ENCODE measurements at regions of chr9 and their contacts with region 1.

Region 1: GRCh38 chr9:120875954-120876841 is 790 bp downstream of the PHF19 start:
- DNase-seq: peak; percentile 61 to 89 (median 67)
- H3K4me3 ChIP-seq: peak overlapping the region; percentile 67 to 83
- H3K4me3 Mint-ChIP-seq: peak overlapping the region; percentile 81 to 91 (median 85)
- H3K27ac ChIP-seq: peak overlapping the region; percentile 78
- H3K27ac Mint-ChIP-seq: peak overlapping the region; percentile 85 to 98 (median 93)
- H3K4me1 ChIP-seq: peaks cover 73% of the 10 kb centered on the region
- H3K4me1 Mint-ChIP-seq: peaks cover 61 to 80% (median 66%) of the 10 kb centered on the region in 4 donors
- H3K27me3 ChIP-seq: no peaks in the 10 kb centered on the region
- H3K27me3 Mint-ChIP-seq: no peaks in the 10 kb centered on the region

Region 2: GRCh38 chr9:120692901-120693699 is 183.1 kb before region 1 on chr9:
- CTCF ChIA-PET with region 1: no interaction called
- POLR2A ChIA-PET with region 1: no interaction called
- intact Hi-C with region 1: no loop called
- DNase-seq: no peak
- H3K4me3 ChIP-seq: no peak overlapping the region
- H3K4me3 Mint-ChIP-seq: no peak overlapping the region
- H3K27ac ChIP-seq: no peak overlapping the region
- H3K27ac Mint-ChIP-seq: peak overlapping the region in 1 of 7 donors; percentile 1
- H3K4me1 ChIP-seq: peaks cover 12% of the 10 kb centered on the region
- H3K4me1 Mint-ChIP-seq: peaks cover 18 to 35% (median 26%) of the 10 kb centered on the region in 4 donors
- H3K27me3 ChIP-seq: no peaks in the 10 kb centered on the region
- H3K27me3 Mint-ChIP-seq: no peaks in the 10 kb centered on the region

Region 3: DNA sequence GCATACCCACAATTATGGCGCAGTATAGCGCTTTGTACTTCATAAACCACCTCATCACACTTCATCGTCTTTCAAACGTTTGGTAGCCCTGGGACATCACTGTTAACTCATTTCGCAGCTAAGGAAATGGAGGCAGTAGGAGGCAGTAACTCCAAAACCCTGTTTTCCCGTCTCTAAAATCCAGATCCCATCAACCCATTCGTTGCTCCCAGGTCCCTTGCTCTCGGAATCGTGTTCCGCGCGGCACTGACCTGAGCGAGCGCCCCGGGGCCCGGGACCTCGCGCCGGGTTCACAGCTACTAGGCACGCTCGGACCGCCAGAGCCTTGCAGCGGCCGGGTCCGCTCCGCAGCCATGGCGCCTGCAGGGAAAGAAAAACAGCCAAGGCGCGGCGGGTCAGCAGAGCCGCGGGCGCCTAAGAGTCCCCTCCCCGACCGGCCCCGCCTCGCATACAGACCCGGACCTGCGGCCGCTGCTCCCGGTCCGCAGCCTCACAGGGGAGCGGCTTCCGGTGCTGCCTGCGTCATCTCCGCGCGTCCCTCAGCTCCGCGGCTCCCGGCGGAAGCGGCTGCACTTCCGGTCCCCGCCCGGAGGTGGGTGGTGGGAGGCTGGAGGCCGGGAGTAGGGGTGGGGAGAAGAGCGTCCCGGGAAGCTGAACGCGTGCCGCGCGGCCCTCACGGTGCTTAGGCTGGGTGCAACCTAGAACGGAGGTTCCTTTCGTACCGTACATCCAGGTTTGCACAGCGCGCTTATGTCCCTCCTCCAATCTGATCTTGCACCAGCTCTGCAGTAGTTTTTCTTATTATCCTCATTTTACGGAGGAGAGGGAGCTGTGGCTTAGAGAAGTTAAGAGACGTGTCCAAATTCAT is 83.1 kb before region 1 on chr9 and contains the start of gene FBXW2:
- CTCF ChIA-PET with region 1: no interaction called
- POLR2A ChIA-PET with region 1: interaction called, 13 read pairs
- intact Hi-C with region 1: no loop called
- DNase-seq: peak; percentile 74 to 83 (median 78)
- H3K4me3 ChIP-seq: peak within 1 kb of the TSS; percentile 82 to 94
- H3K4me3 Mint-ChIP-seq: peak within 1 kb of the TSS; percentile 89 to 98 (median 92)
- H3K27ac ChIP-seq: peak within 1 kb of the TSS; percentile 77
- H3K27ac Mint-ChIP-seq: peak within 1 kb of the TSS; percentile 90 to 97 (median 93)
- H3K4me1 ChIP-seq: peaks cover 58% of the 10 kb centered on the region
- H3K4me1 Mint-ChIP-seq: peaks cover 39 to 62% (median 50%) of the 10 kb centered on the region in 4 donors
- H3K27me3 ChIP-seq: no peaks in the 10 kb centered on the region
- H3K27me3 Mint-ChIP-seq: no peaks in the 10 kb centered on the region
- total RNA-seq, gene FBXW2: 73.7 to 77.8 TPM

Region 4: GRCh38 chr9:120886490-120886967 is 10.3 kb after region 1 on chr9:
- CTCF ChIA-PET with region 1: interaction called, 58 read pairs
- POLR2A ChIA-PET with region 1: interaction called, 5,577 read pairs
- intact Hi-C with region 1: loop called (anchors 1 kb)
- DNase-seq: no peak
- H3K4me3 ChIP-seq: no peak overlapping the region
- H3K4me3 Mint-ChIP-seq: peak overlapping the region in 1 of 8 donors; percentile 15
- H3K27ac ChIP-seq: no peak overlapping the region
- H3K27ac Mint-ChIP-seq: peak overlapping the region in 6 of 7 donors; percentile 1 to 89 (median 46)
- H3K4me1 ChIP-seq: peaks cover 67% of the 10 kb centered on the region
- H3K4me1 Mint-ChIP-seq: peaks cover 37 to 77% (median 58%) of the 10 kb centered on the region in 4 donors
- H3K27me3 ChIP-seq: no peaks in the 10 kb centered on the region
- H3K27me3 Mint-ChIP-seq: no peaks in the 10 kb centered on the region

Region 5: DNA sequence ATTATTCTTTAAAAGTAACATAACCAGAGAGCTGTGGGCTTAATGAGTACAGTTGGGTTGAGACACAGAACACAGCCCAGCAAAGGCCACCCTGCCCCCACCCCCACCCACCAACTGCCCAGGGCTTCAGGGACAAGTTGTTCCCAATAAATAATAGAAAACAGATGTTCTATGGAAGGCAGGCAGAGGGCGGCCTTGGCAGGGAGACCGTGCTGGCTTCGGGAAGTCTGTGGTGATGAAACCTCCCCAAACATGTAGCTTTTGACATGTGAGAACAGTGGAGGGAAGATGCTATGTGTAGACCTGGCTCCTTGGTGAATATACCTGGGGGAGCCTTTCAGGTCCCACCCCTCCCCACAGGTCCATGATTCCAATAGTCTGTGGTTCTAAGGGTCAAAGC is 40.4 kb after region 1 on chr9:
- CTCF ChIA-PET with region 1: interaction called, 12 read pairs
- POLR2A ChIA-PET with region 1: interaction called, 5,577 read pairs
- intact Hi-C with region 1: no loop called
- DNase-seq: no peak
- H3K4me3 ChIP-seq: no peak overlapping the region
- H3K4me3 Mint-ChIP-seq: peak overlapping the region; percentile 2 to 84 (median 69)
- H3K27ac ChIP-seq: peak overlapping the region; percentile 50
- H3K27ac Mint-ChIP-seq: peak overlapping the region; percentile 78 to 96 (median 89)
- H3K4me1 ChIP-seq: peaks cover 92% of the 10 kb centered on the region
- H3K4me1 Mint-ChIP-seq: peaks cover 59 to 98% (median 79%) of the 10 kb centered on the region in 4 donors
- H3K27me3 ChIP-seq: no peaks in the 10 kb centered on the region
- H3K27me3 Mint-ChIP-seq: no peaks in the 10 kb centered on the region

Region 6: DNA sequence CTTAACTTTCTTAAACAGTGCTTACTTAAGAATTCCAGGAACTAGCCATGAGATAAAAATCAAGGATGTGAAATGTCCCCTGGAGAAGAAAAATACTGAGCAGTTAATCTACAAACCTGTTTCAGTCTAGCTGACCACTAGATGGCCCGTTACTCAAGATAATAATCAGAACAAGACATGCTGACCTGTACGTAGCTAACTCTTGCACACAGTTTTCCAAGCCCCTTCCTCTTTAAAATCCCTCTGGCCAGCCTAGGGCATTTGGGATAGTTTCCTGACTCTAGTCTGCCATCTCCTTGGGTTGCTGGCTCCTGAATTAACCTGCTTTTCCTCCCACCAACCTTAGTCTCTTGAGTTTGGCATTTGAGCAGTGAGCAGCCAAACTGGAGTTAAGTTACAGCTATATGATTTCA is 109.6 kb after region 1 on chr9:
- CTCF ChIA-PET with region 1: no interaction called
- POLR2A ChIA-PET with region 1: no interaction called
- intact Hi-C with region 1: loop called (anchors 5 kb)
- DNase-seq: no peak
- H3K4me3 ChIP-seq: no peak overlapping the region
- H3K4me3 Mint-ChIP-seq: no peak overlapping the region
- H3K27ac ChIP-seq: no peak overlapping the region
- H3K27ac Mint-ChIP-seq: no peak overlapping the region
- H3K4me1 ChIP-seq: no peaks in the 10 kb centered on the region
- H3K4me1 Mint-ChIP-seq: peaks cover 0 to 5% (median 2%) of the 10 kb centered on the region in 4 donors
- H3K27me3 ChIP-seq: no peaks in the 10 kb centered on the region
- H3K27me3 Mint-ChIP-seq: peaks cover 0 to 2% of the 10 kb centered on the region in 2 donors

Measured in CD4-positive, alpha-beta memory T cell (primary cell).